Sciatic nerve (tissue), 2 donors: ENCODE measurements at regions of chr4 and their contacts with region 1.

Region 1: GRCh38 chr4:60579335-60579734 is 620.8 kb upstream of the ADGRL3 start:
- DNase-seq: no peak
- ATAC-seq: no peak

Region 2: GRCh38 chr4:61590881-61591280 is 1011.5 kb after region 1 on chr4:
- intact Hi-C with region 1: no loop called
- DNase-seq: no peak
- ATAC-seq: no peak

Region 3: GRCh38 chr4:62199291-62199810 is 1620.0 kb after region 1 on chr4:
- intact Hi-C with region 1: loop called (anchors 5 kb)
- DNase-seq: no peak
- ATAC-seq: no peak